OCI-LY7 (cell line): ENCODE measurements at regions of chr16 and their contacts with region 1.

Region 1: GRCh38 chr16:25014500-25015147 is 545 bp downstream of the ARHGAP17 start:
- DNase-seq: peak; percentile 42
- H3K4me3 ChIP-seq: peak overlapping the region; percentile 79
- H3K27ac ChIP-seq: peak overlapping the region; percentile 89
- H3K4me1 ChIP-seq: peaks cover 77% of the 10 kb centered on the region
- CTCF ChIP-seq: no peak

Region 2: GRCh38 chr16:23624092-23624491 is 1390.5 kb before region 1 on chr16:
- CTCF ChIA-PET with region 1: no interaction called
- POLR2A ChIA-PET with region 1: no interaction called
- intact Hi-C with region 1: no loop called
- DNase-seq: no peak
- H3K4me3 ChIP-seq: no peak overlapping the region
- H3K27ac ChIP-seq: no peak overlapping the region
- H3K4me1 ChIP-seq: no peaks in the 10 kb centered on the region
- CTCF ChIP-seq: no peak

Region 3: GRCh38 chr16:24539291-24539849 is 475.3 kb before region 1 on chr16 and contains the start of gene RBBP6:
- CTCF ChIA-PET with region 1: no interaction called
- POLR2A ChIA-PET with region 1: no interaction called
- intact Hi-C with region 1: loop called (anchors 5 kb)
- DNase-seq: peak; percentile 97
- H3K4me3 ChIP-seq: peak within 1 kb of the TSS; percentile 99
- H3K27ac ChIP-seq: peak within 1 kb of the TSS; percentile 80
- H3K4me1 ChIP-seq: peaks cover 44% of the 10 kb centered on the region
- CTCF ChIP-seq: peak; percentile 56
- total RNA-seq, gene RBBP6: 32.6 and 41.2 TPM in 2 replicates

Region 4: DNA sequence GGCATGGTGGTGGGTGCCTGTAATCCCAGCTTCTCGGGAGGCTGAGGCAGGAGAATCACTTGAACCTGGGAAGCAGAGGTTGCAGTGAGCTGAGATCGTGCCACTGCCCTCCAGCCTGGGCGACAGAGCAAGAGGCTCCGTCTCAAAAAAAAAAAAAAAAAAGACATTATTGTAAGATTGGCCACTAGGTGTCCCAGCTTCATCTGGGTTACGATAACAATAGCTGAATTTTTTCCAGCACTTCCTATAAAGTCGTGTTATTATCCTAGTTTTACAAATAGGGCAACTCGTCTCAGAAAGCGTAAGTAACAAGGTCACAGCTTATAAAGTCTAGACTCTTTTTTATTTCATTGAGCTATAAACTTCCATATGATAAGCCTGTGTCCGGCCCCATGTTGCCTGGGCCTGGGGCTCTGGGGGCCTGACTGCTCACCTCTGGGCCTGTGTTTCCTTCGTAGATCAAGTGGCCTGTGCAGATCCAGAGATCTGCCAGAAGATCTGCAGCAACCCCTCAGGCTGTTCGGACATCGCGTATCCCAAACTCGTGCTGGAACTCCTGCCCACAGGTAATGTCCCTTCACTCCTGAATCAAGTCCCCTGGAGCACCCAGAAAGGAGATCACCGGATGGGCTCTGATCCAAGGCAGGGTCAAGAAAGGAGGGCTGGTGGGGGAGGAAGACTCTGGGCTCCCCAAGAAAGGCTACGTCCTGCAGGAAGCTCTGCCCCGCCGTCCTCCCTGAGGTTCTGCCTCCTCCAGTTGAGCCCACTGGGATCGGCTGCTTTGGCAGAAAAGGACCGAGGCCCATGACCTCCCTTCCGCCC is 108.2 kb before region 1 on chr16:
- CTCF ChIA-PET with region 1: interaction called, 3 read pairs
- POLR2A ChIA-PET with region 1: interaction called, 4 read pairs
- intact Hi-C with region 1: loop called (anchors 2 kb)
- DNase-seq: peak; percentile 41
- H3K4me3 ChIP-seq: no peak overlapping the region
- H3K27ac ChIP-seq: no peak overlapping the region
- H3K4me1 ChIP-seq: no peaks in the 10 kb centered on the region
- CTCF ChIP-seq: peak; percentile 77

Region 5: DNA sequence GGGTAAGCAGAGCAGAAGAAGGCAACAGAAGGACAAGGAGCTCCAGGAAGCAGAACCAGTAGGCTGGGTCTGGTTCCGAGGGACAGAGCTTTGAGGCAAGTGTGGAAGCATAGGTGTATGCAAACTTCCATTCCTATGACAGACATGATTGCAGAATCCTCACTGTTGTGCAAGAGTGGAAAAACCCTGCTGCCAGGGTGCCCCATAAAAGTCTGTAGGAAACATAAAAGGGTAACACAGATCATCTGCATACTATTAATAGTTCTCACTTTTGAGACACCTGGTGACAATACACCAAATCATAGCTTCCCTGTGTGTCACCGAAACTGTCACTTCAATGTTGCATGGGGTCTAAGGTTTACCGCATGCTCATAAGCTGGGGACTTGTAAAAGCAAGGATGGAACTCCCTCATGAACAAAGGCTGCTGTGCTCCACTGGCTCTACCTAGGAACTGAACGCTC is 39.2 kb before region 1 on chr16:
- CTCF ChIA-PET with region 1: no interaction called
- POLR2A ChIA-PET with region 1: interaction called, 8 read pairs
- intact Hi-C with region 1: loop called (anchors 1 kb)
- DNase-seq: peak; percentile 89
- H3K4me3 ChIP-seq: peak overlapping the region; percentile 51
- H3K27ac ChIP-seq: peak overlapping the region; percentile 82
- H3K4me1 ChIP-seq: peaks cover 88% of the 10 kb centered on the region
- CTCF ChIP-seq: no peak

Region 6: DNA sequence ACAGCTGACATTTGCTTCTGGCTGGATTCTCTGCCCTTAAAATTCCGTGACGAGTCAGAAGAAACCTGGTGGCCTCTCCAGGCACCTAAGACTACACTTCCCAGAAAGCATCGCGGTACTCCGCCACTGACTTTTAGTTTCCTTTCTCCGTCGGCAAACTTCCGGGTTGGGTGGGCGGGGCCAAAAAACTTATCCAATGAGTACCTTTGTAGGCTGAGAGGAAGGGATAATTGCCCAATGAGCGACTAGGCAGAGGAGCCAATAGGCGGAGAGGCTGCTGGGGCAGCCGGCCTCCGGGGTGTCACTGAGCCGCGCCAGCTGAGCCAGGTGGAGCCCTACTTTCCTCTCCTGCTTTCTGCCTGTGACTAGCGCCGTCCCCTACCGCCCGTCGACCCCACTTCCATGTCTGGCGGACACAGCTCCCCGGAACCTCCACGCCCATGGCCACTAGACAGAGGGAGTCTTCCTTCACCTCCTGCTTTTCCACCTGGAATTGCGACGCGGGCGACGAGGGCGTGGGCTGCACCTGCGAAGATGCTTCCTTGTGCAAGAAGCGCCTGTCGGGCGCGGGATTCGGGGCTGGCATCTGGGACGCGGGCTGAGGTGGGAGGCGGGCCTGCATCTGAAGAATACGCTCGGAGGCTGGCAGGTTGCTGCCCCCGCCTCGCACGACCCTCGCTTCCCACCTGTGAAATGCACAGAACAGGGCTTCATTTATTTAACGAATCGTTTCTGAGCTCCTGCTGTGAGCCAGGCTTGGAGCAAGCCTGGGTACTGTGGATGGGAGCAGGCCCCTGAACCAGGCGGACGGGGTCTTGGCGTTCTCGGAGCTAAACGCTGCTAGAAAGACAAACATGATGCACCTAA is 17.1 kb after region 1 on chr16:
- CTCF ChIA-PET with region 1: interaction called, 3 read pairs
- POLR2A ChIA-PET with region 1: interaction called, 17 read pairs
- intact Hi-C with region 1: no loop called
- DNase-seq: peak; percentile 98
- H3K4me3 ChIP-seq: peak overlapping the region; percentile 75
- H3K27ac ChIP-seq: peak overlapping the region; percentile 70
- H3K4me1 ChIP-seq: peaks cover 30% of the 10 kb centered on the region
- CTCF ChIP-seq: no peak

Region 7: GRCh38 chr16:25051406-25052150 is 37.0 kb after region 1 on chr16:
- CTCF ChIA-PET with region 1: interaction called, 3 read pairs
- POLR2A ChIA-PET with region 1: interaction called, 15 read pairs
- intact Hi-C with region 1: loop called (anchors 2 kb)
- DNase-seq: no peak
- H3K4me3 ChIP-seq: no peak overlapping the region
- H3K27ac ChIP-seq: no peak overlapping the region
- H3K4me1 ChIP-seq: peaks cover 50% of the 10 kb centered on the region
- CTCF ChIP-seq: no peak

Region 8: DNA sequence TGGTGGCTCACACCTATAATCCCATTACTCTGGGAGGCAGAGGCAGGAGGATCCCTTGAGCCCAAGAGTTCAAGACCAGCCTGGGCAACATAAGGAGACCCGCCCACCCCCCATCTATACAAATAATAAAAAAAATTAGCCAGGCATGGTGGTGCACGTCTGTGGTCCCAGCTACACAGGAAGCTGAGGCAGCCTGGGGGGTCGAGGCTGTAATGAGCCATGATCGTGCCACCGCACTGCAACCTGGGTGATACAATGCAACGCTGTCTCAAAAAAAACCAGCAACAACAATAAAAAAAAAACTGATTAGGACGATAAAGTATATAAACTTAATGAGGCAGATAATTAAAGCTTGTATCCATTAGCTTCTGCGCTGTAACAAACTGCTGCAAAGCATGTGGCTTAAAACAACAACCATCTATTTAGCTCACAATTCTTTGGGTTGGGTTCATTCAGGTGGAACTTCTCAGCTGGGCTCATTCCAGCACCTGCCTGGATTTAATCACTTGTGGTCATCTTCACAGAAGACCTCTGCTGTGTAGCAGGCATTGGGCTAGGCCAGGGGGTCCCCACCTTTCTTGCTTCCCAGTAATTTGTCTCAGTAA is 142.7 kb after region 1 on chr16:
- CTCF ChIA-PET with region 1: no interaction called
- POLR2A ChIA-PET with region 1: no interaction called
- intact Hi-C with region 1: no loop called
- DNase-seq: no peak
- H3K4me3 ChIP-seq: no peak overlapping the region
- H3K27ac ChIP-seq: no peak overlapping the region
- H3K4me1 ChIP-seq: no peaks in the 10 kb centered on the region
- CTCF ChIP-seq: no peak